ENCODE measurements at regions of chr6 and their contacts with region 1.

Region 1: GRCh38 chr6:35449287-35449881 is 2.8 kb upstream of the FANCE start:
- DNase-seq: peak in 1 of 3 donors; percentile 48
- ATAC-seq: peak; percentile 63
- H3K4me3 ChIP-seq: no peak overlapping the region
- H3K4me1 ChIP-seq: peaks cover 12% of the 10 kb centered on the region
- CTCF ChIP-seq: no peak

Region 2: GRCh38 chr6:35052694-35053565 is 396.5 kb before region 1 on chr6:
- intact Hi-C with region 1: no loop called
- DNase-seq: peak in 1 of 3 donors; percentile 44
- ATAC-seq: peak; percentile 49
- H3K4me3 ChIP-seq: no peak overlapping the region
- H3K4me1 ChIP-seq: peaks cover 11% of the 10 kb centered on the region
- CTCF ChIP-seq: no peak

Region 3: GRCh38 chr6:35342258-35343091 is 106.9 kb before region 1 on chr6 and contains the start of gene PPARD:
- intact Hi-C with region 1: loop called (anchors 5 kb)
- DNase-seq: peak; percentile 98 to 100 (median 99)
- ATAC-seq: peak; percentile 100
- H3K4me3 ChIP-seq: peak within 1 kb of the TSS; percentile 50
- H3K4me1 ChIP-seq: peaks cover 24% of the 10 kb centered on the region
- CTCF ChIP-seq: peak; percentile 98
- total RNA-seq, gene PPARD: 44.4 to 66.7 (median 65.6) TPM